Activated CD8-positive, alpha-beta T cell treated with anti-CD3 and anti-CD28 coated beads for 36 hours (primary cell): ENCODE measurements at regions of chr3 and their contacts with region 1.

Region 1: DNA sequence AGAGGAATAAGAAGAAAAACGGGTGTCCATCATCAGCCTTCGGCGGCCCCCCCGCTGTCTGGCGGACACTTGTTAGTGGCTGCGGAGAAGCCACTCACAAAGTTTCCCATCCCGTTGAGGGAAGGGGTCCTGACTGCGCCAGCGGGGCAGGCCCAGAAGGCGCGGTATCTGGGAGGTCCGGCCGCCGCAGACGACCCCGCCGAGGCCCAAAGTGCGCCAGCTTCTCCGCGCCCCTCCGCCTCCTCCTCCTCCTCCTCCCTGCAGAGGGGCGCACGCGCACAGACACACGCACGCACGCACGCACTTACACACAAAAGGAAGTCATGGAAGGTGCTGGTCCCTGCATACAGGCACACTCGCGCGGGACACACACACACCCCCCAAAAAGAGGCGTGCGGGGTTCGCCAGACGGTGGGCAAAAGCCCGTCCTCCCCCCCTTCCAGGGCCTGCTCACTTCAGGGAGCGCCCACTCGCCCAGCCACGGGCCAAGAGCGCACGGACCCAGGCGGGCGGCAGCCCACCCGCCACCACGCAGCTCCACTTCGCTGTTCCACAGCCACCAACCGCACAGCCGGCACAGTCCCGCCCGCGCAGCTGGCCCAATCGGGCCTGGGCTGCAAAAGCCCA is 18.0 kb downstream of the ZNF148 start:
- DNase-seq: peak; percentile 74
- ATAC-seq: peak; percentile 95
- H3K4me3 Mint-ChIP-seq: peak overlapping the region; percentile 78
- H3K27ac Mint-ChIP-seq: peak overlapping the region; percentile 95
- H3K4me1 Mint-ChIP-seq: peaks cover 58% of the 10 kb centered on the region
- H3K27me3 Mint-ChIP-seq: no peaks in the 10 kb centered on the region
- CTCF ChIP-seq: no peak

Region 2: DNA sequence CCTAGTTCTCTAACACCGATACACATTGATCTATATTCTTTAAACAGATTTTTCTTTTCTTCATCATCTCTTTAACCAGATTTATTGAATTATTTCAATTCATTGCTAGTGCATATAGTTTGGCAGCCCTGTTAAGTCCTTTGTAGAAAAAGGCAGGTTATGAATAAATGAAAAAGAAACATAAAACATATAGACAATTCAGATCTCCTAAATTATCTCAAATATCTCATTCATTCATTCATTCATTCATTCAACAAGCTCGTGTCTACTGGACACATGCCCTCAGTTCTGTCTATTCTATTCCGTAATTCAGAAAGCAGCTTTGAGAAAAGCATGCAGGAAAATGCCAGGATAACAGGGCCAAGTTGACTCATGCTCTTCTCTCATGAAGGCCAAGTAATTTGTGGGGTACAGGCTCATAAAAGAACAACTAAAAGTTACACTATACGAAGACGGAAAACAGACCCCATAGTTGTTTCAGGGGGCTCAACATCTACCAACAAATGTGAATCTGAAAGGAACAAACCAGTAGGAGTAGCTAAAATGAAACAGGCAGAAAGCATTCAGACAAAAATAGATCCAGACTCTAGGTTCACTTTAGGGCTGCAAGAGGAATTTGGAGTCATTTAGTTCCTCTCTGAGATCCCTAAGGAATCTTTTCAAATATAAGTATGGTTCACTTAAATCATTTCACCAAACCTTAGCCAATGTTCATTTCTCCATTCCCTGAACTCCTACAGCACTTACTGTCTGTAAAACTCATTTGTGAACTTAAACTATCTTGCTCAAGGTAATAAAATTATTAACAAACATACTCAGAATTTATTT is 10.5 kb after region 1 on chr3:
- CTCF ChIA-PET with region 1: interaction called, 3 read pairs
- POLR2A ChIA-PET with region 1: interaction called, 12 read pairs
- intact Hi-C with region 1: no loop called
- DNase-seq: no peak
- ATAC-seq: no peak
- H3K4me3 Mint-ChIP-seq: no peak overlapping the region
- H3K27ac Mint-ChIP-seq: no peak overlapping the region
- H3K4me1 Mint-ChIP-seq: peaks cover 65% of the 10 kb centered on the region
- H3K27me3 Mint-ChIP-seq: no peaks in the 10 kb centered on the region
- CTCF ChIP-seq: no peak

Region 3: GRCh38 chr3:125374996-125375941 is 18.1 kb after region 1 on chr3 and contains the start of gene ZNF148:
- CTCF ChIA-PET with region 1: interaction called, 3 read pairs
- POLR2A ChIA-PET with region 1: interaction called, 18 read pairs
- intact Hi-C with region 1: no loop called
- DNase-seq: peak; percentile 90
- ATAC-seq: peak; percentile 93
- H3K4me3 Mint-ChIP-seq: peak within 1 kb of the TSS; percentile 95
- H3K27ac Mint-ChIP-seq: peak within 1 kb of the TSS; percentile 97
- H3K4me1 Mint-ChIP-seq: peaks cover 29% of the 10 kb centered on the region
- H3K27me3 Mint-ChIP-seq: no peaks in the 10 kb centered on the region
- CTCF ChIP-seq: no peak
- total RNA-seq, gene ZNF148: 36.3 to 36.9 TPM